Cardiac septum (tissue), 1 donor: ENCODE measurements at regions of chr6 and their contacts with region 1.

Region 1: GRCh38 chr6:135506270-135506997 is 8.9 kb upstream of the AHI1 start:
- DNase-seq: no peak

Region 2: DNA sequence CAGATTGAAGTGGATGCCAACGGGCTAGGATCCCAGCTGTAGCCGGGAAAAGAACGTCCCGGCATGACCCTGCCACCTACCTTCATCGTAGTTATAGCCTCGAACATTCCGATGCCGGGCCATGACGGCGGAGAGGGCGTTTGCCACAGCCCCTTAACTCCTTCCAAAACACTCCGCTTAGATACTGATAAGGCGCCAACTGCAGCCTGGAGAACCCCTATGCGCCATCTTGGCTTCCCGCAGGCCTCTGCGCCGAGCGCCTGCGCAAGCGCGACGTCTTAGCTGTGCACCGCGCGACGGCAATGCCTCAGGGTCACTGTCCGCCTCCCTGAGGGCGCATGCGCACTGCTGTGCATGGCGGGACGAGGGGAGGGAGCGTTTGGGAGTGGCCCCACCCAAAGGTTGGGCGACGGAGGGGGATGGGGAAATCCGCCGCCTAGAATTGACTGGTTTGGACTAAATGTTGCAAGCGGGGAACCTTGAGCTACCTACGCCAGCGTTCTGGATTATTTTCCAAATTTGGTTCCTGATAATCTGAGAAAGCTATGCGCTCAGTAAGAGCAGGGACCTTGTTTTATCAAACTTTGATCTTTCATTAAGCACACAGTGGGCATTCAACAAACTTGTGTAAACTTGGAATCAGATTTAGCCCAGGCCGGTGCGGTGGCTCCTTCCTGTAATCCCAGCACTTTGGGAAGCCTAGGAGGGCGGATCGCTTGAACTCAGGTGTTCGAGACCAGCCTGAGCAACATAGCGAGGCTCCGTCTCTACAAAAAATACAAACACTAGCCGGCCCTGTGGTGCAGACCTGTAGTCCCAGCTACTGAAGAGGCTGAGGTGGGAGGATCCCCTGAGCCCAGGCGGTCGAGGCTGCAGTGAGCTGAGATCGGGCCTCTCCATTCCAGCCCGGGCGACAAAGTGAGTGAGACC is 451.6 kb before region 1 on chr6 and contains the start of gene HBS1L:
- intact Hi-C with region 1: no loop called
- DNase-seq: peak; percentile 99
- total RNA-seq, gene HBS1L: 85.0 TPM

Region 3: GRCh38 chr6:135475292-135475886 is 31.0 kb before region 1 on chr6:
- intact Hi-C with region 1: no loop called
- DNase-seq: no peak

Region 4: DNA sequence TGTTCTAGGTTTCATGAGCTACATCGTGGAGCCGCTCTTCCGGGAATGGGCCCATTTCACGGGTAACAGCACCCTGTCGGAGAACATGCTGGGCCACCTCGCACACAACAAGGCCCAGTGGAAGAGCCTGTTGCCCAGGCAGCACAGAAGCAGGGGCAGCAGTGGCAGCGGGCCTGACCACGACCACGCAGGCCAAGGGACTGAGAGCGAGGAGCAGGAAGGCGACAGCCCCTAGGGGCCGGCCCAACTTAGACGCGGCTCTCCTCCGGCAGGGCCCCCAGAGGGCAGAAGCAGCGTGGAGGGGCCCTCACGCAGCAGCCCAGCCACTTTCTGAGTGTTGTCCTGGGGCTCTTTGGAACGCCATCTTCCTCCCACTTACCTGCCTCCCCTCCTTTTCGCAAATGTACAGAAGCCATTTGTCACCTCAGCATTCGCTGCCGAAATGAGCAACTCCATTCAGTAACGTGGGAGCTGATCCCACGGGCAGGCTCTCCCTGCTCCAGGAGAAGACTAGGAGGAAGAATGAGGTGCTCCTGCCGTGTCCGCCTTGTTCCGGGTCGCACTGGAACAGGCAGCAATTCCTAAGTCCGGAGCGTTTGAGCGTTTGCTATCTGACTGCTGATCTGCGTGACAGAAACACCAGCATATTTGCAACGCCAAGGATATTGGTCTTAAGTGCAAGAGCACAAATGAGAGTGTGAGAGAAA is 685.3 kb after region 1 on chr6:
- intact Hi-C with region 1: no loop called
- DNase-seq: no peak

Region 5: DNA sequence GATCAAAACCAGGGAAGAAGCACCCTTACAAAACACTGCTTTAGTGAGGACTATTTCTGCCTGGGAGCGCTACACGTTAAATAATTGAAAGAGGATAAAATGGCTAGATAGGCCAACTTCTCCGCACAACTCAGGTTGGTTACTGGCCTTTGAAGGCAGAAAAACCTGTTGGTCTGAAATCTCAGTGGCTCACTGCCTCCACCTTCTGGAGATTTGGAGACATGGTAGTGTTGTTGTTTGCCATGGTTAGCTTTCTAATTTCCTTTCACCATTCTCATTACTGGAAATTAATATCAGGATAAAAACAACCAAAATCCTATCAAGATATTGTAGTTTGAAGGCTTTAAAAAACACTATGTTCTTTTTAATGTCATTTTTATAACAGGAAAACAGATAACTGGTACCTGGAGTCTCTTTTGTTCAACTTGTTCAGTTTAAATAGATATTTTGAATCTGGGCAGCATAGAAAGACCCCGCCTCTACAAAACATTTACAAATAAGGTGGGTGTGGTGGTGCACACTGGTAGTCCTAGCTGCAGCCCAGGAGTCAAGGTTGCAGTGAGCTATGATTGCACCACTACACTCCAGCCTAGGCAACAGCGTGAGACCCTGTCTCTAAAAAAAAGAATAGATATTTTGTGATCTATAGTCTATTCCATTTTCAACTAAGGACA is 810.7 kb after region 1 on chr6:
- intact Hi-C with region 1: loop called (anchors 10 kb)
- DNase-seq: no peak